ENCODE measurements at regions of chr12 and their contacts with region 1.

Region 1: DNA sequence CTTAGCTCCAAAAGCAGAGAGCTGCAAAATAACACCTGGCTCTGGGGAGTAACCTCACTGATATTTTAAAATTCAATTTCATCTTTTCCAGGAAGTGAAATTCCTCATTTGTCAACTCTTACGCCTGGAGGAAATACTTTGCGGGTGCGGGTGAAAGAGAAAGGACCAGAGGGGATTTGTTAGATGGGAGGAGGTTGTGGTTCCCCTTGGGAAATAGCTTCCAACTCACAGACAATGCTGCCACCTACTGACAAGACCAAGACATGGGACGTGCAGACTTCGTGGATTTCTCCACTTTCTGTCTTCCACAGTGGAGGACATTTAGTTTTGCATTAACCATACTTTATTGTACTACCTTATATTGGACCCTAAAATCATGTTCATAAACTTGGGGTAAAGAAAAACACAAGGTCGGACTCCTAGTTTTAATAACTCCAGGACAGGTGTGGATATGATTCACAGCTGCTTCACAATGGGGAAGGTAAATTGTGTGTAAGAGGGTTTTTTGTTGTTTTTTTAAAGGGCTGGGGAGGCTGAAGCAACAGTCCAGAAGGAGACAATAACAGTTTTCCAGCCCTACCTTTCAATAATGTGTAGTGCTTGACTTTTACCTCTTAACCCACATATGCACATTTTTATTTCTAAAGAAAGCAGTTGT is 10.8 kb downstream of the FBXL14 start:
- DNase-seq: peak; percentile 63 to 83 (median 70)
- ATAC-seq: peak; percentile 87
- H3K4me3 ChIP-seq: no peak overlapping the region
- H3K27ac ChIP-seq: no peak overlapping the region
- H3K4me1 ChIP-seq: no peaks in the 10 kb centered on the region; a peak in 2 of 5 replicates
- H3K27me3 ChIP-seq: no peaks in the 10 kb centered on the region
- CTCF ChIP-seq: peak; percentile 75 to 81 (median 79)
- EP300 ChIP-seq: no peak
- POLR2A ChIP-seq: no peak
- RAD21 ChIP-seq: peak; percentile 76 to 93

Region 2: DNA sequence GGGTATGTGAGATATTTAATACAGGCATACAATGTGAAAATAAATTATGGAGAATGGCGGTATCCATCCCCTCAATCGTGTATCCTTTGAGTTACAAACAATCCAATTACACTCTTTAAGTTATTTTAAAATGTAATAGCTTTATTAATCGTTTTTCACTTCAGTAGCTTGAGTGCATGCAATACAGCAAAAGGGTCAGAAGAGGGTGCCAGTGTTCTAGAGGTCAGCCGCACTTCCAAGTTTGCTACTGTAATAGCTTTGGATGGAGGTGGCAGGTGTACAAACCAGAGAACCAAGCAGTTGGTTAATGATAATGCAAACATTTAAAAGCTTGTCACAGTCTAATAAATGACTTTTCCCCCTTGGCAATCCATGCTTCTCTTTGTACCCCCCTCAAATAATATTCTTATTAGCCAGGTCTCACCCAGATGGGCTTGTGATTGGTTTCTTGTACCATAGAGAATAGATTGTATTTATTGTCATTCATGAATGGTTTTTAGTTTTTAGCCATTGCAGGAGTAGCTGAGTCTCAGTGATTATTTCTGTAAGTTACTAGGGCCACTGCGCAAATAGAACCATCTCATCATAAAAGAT is 465.5 kb before region 1 on chr12:
- CTCF ChIA-PET with region 1: interaction called, 25 read pairs
- POLR2A ChIA-PET with region 1: interaction called, 14 read pairs
- in situ Hi-C with region 1: no loop called
- intact Hi-C with region 1: loop called (anchors 1 kb)
- DNase-seq: peak; percentile 17 to 75 (median 42)
- ATAC-seq: peak; percentile 58; the same call in 2 of the 3 replicates
- H3K4me3 ChIP-seq: no peak overlapping the region
- H3K27ac ChIP-seq: no peak overlapping the region
- H3K4me1 ChIP-seq: no peaks in the 10 kb centered on the region
- H3K27me3 ChIP-seq: no peaks in the 10 kb centered on the region
- CTCF ChIP-seq: peak; percentile 67 to 80 (median 72)
- EP300 ChIP-seq: no peak
- POLR2A ChIP-seq: no peak
- RAD21 ChIP-seq: peak; percentile 83 to 88

Region 3: DNA sequence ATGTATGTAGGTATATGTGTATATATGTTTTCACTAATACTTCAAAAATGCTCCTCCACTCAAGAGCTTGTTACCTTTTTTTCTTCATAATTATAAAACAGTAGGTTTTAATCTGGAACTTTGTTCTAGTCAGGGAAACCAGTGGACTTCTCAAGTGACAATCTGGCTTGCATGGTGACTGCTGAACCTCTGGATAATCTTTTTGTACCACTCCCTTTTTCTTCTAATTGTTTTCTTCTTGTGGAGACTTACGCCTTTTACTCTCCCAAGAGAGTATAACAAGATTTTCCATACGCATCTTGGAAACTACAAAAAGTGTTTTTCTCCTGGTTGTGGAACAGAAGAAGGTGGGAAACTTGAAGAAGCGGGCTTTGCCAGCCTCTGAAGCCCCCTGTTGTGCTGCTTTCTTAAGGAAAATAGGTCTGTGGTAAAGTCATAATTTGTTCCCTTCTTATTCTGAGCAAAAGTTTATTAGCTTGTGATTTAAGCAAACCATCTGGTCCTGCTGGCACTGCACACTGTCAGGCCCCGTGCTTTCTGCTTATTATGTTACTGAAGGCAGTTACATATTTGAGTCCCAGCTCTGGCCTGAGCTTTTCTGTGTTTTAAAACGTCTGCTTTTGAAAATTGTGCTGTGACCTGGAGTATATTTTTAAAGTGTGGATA is 300.7 kb before region 1 on chr12:
- CTCF ChIA-PET with region 1: interaction called, 4 read pairs
- POLR2A ChIA-PET with region 1: no interaction called
- in situ Hi-C with region 1: loop called (anchors 25 kb)
- intact Hi-C with region 1: loop called (anchors 2 kb)
- DNase-seq: no peak
- ATAC-seq: no peak
- H3K4me3 ChIP-seq: no peak overlapping the region
- H3K27ac ChIP-seq: no peak overlapping the region
- H3K4me1 ChIP-seq: peaks cover 0 to 9% of the 10 kb centered on the region in 2 experiments; a peak in 3 of 5 replicates
- H3K27me3 ChIP-seq: no peaks in the 10 kb centered on the region
- CTCF ChIP-seq: no peak
- EP300 ChIP-seq: no peak
- POLR2A ChIP-seq: no peak
- RAD21 ChIP-seq: no peak

Region 4: GRCh38 chr12:1398673-1399072 is 184.9 kb before region 1 on chr12:
- CTCF ChIA-PET with region 1: interaction called, 5 read pairs
- POLR2A ChIA-PET with region 1: no interaction called
- in situ Hi-C with region 1: no loop called
- intact Hi-C with region 1: loop called (anchors 1 kb)
- DNase-seq: peak in 1 of 4 experiments; percentile 14
- ATAC-seq: no peak
- H3K4me3 ChIP-seq: no peak overlapping the region
- H3K27ac ChIP-seq: no peak overlapping the region
- H3K4me1 ChIP-seq: no peaks in the 10 kb centered on the region; a peak in 2 of 5 replicates
- H3K27me3 ChIP-seq: no peaks in the 10 kb centered on the region
- CTCF ChIP-seq: peak in 1 of 3 experiments; percentile 29; a peak in 1 of 6 replicates
- EP300 ChIP-seq: no peak
- POLR2A ChIP-seq: no peak
- RAD21 ChIP-seq: peak in 1 of 2 experiments; percentile 49; a peak in 2 of 4 replicates

Region 5: GRCh38 chr12:1474041-1474573 is 109.4 kb before region 1 on chr12:
- CTCF ChIA-PET with region 1: no interaction called
- POLR2A ChIA-PET with region 1: no interaction called
- in situ Hi-C with region 1: no loop called
- intact Hi-C with region 1: no loop called
- DNase-seq: no peak
- ATAC-seq: no peak
- H3K4me3 ChIP-seq: no peak overlapping the region
- H3K27ac ChIP-seq: no peak overlapping the region
- H3K4me1 ChIP-seq: no peaks in the 10 kb centered on the region; a peak in 3 of 5 replicates
- H3K27me3 ChIP-seq: no peaks in the 10 kb centered on the region
- CTCF ChIP-seq: no peak
- EP300 ChIP-seq: no peak
- POLR2A ChIP-seq: no peak
- RAD21 ChIP-seq: no peak

Region 6: DNA sequence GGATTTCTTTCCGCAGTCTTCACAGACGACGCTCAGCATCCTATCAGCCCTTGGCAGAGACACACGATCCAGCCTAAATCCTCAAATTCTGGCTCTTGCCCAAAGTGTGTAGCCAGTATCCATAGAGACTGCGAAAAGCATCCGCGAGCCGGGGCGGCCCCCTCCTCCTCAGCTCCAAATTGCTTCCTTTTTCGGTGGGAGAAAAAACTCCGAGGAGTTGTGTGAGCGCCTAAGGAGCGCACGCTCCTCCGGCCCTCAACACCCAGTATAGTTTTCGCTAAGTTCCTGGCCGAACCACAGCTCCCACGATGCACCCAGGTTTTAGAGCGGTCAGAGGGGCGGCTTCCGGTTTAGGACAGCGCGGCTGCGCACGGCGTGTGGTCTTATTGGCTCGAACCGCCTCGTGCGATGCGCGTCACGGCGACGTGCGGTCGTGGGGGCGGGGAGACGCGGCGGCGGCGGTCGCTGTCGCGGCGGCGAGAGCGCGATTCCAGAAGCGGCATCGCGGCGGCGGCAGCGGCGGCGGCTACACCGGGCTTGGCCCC is 107.1 kb after region 1 on chr12 and contains the start of gene ADIPOR2:
- CTCF ChIA-PET with region 1: no interaction called
- POLR2A ChIA-PET with region 1: no interaction called
- in situ Hi-C with region 1: no loop called
- intact Hi-C with region 1: no loop called
- DNase-seq: peak; percentile 87 to 96 (median 92)
- ATAC-seq: peak; percentile 96
- H3K4me3 ChIP-seq: peak within 1 kb of the TSS; percentile 95
- H3K27ac ChIP-seq: peak within 1 kb of the TSS; percentile 92
- H3K4me1 ChIP-seq: peaks cover 0 to 4% of the 10 kb centered on the region in 2 experiments; a peak in 3 of 5 replicates
- H3K27me3 ChIP-seq: no peaks in the 10 kb centered on the region
- CTCF ChIP-seq: no peak
- EP300 ChIP-seq: no peak
- POLR2A ChIP-seq: peak; percentile 84
- RAD21 ChIP-seq: no peak
- polyA plus RNA-seq, gene ADIPOR2: 10.9 to 15.6 TPM

Region 7: GRCh38 chr12:2118061-2118460 is 534.5 kb after region 1 on chr12:
- CTCF ChIA-PET with region 1: no interaction called
- POLR2A ChIA-PET with region 1: no interaction called
- in situ Hi-C with region 1: no loop called
- intact Hi-C with region 1: no loop called
- DNase-seq: peak; percentile 5 to 15 (median 10)
- ATAC-seq: peak; percentile 61
- H3K4me3 ChIP-seq: no peak overlapping the region
- H3K27ac ChIP-seq: no peak overlapping the region
- H3K4me1 ChIP-seq: no peaks in the 10 kb centered on the region
- H3K27me3 ChIP-seq: peaks cover 7 to 58% of the 10 kb centered on the region in 2 experiments; a peak in 4 of 5 replicates
- CTCF ChIP-seq: peak in 2 of 3 experiments; percentile 17 to 21; a peak in 3 of 6 replicates
- EP300 ChIP-seq: no peak
- POLR2A ChIP-seq: no peak
- RAD21 ChIP-seq: 0 out of 4 replicates have a peak, but pooled peaks of 1 of the 2 experiments have one; percentile 17